Colonic mucosa (tissue), 4 donors: ENCODE measurements at regions of chr3 and their contacts with region 1.

Region 1: GRCh38 chr3:158434412-158435038 is 136.5 kb upstream of the MLF1 start:
- DNase-seq: peak; percentile 70
- H3K4me3 ChIP-seq: no peak overlapping the region
- H3K27ac ChIP-seq: no peak overlapping the region
- H3K4me1 ChIP-seq: no peaks in the 10 kb centered on the region
- H3K27me3 ChIP-seq: no peaks in the 10 kb centered on the region
- CTCF ChIP-seq: peak; percentile 67

Region 2: GRCh38 chr3:157618075-157618760 is 816.3 kb before region 1 on chr3:
- intact Hi-C with region 1: loop called (anchors 5 kb)
- DNase-seq: no peak
- H3K4me3 ChIP-seq: no peak overlapping the region
- H3K27ac ChIP-seq: no peak overlapping the region
- H3K4me1 ChIP-seq: no peaks in the 10 kb centered on the region
- H3K27me3 ChIP-seq: peaks cover 5% of the 10 kb centered on the region
- CTCF ChIP-seq: peak; percentile 54

Region 3: GRCh38 chr3:158488670-158489069 is 54.1 kb after region 1 on chr3:
- intact Hi-C with region 1: no loop called
- DNase-seq: no peak
- H3K4me3 ChIP-seq: no peak overlapping the region
- H3K27ac ChIP-seq: no peak overlapping the region
- H3K4me1 ChIP-seq: no peaks in the 10 kb centered on the region
- H3K27me3 ChIP-seq: no peaks in the 10 kb centered on the region
- CTCF ChIP-seq: no peak